ENCODE measurements at regions of chr2 and their contacts with region 1.

Region 1: GRCh38 chr2:9112079-9112721 is 94.4 kb upstream of the ASAP2 start:
- DNase-seq: peak; percentile 93
- H3K4me3 ChIP-seq: no peak overlapping the region
- H3K27ac ChIP-seq: peak overlapping the region; percentile 88
- H3K27me3 ChIP-seq: no peaks in the 10 kb centered on the region
- CTCF ChIP-seq: no peak

Region 2: DNA sequence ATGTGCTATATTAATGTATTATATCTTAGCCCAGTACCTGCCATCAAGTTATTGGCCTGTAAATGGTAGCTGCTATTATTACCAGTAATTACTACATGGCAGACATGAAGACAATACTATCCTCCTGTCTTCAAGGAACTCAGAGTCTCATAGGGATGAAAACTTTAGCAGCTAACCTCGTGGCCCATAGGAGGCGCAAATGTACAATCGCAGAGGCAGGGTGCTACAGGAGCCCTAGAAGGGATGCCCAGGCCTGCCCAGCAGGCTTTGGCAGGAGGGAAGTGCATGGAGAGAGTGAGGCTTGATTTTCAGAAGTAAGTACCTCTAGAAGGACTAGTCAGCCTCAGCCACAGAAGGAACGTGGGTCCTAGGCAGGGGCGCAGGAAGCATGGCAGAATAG is 230.1 kb before region 1 on chr2:
- in situ Hi-C with region 1: loop called (anchors 25 kb)
- DNase-seq: peak; percentile 14
- H3K4me3 ChIP-seq: no peak overlapping the region
- H3K27ac ChIP-seq: no peak overlapping the region
- H3K27me3 ChIP-seq: no peaks in the 10 kb centered on the region
- CTCF ChIP-seq: peak; percentile 71